Mammary epithelial cell (primary cell): ENCODE measurements at regions of chr18 and their contacts with region 1.

Region 1: DNA sequence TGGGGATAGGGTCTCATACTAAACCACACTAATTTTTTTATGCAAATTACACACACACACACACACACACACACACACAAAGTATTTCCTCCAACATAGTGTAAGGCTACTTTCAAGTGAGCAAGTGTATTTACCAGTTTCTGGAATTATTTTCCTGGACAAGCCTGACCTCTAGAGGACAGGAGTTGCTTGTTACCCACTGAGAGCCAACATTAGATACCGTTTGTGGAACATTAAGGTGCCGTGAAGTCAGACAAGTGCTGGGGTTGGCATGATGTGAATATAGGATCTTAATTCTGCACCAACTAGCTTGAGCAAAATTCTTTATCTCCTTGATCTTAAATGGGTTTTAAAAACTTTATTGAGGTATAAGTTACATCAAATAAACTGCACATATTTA is 39.3 kb upstream of the SERPINB2 start:
- DNase-seq: peak; percentile 52
- H3K4me3 ChIP-seq: no peak overlapping the region
- H3K27ac ChIP-seq: no peak overlapping the region
- H3K4me1 ChIP-seq: peaks cover 10% of the 10 kb centered on the region
- H3K27me3 ChIP-seq: no peaks in the 10 kb centered on the region
- CTCF ChIP-seq: peak; percentile 71 to 74

Region 2: GRCh38 chr18:63016270-63016669 is 831.9 kb before region 1 on chr18:
- CTCF ChIA-PET with region 1: no interaction called
- dilution Hi-C with region 1: no loop called
- in situ Hi-C with region 1: no loop called
- intact Hi-C with region 1: loop called (anchors 1 kb)
- DNase-seq: peak; percentile 19
- H3K4me3 ChIP-seq: no peak overlapping the region
- H3K27ac ChIP-seq: no peak overlapping the region
- H3K4me1 ChIP-seq: no peaks in the 10 kb centered on the region
- H3K27me3 ChIP-seq: peaks cover 2% of the 10 kb centered on the region
- CTCF ChIP-seq: peak; percentile 78 to 80

Region 3: GRCh38 chr18:63339920-63340484 is 508.2 kb before region 1 on chr18:
- CTCF ChIA-PET with region 1: no interaction called
- dilution Hi-C with region 1: no loop called
- in situ Hi-C with region 1: no loop called
- intact Hi-C with region 1: loop called (anchors 10 kb)
- DNase-seq: no peak
- H3K4me3 ChIP-seq: no peak overlapping the region
- H3K27ac ChIP-seq: no peak overlapping the region
- H3K4me1 ChIP-seq: peaks cover 16% of the 10 kb centered on the region
- H3K27me3 ChIP-seq: no peaks in the 10 kb centered on the region
- CTCF ChIP-seq: peak; percentile 48 to 53

Region 4: DNA sequence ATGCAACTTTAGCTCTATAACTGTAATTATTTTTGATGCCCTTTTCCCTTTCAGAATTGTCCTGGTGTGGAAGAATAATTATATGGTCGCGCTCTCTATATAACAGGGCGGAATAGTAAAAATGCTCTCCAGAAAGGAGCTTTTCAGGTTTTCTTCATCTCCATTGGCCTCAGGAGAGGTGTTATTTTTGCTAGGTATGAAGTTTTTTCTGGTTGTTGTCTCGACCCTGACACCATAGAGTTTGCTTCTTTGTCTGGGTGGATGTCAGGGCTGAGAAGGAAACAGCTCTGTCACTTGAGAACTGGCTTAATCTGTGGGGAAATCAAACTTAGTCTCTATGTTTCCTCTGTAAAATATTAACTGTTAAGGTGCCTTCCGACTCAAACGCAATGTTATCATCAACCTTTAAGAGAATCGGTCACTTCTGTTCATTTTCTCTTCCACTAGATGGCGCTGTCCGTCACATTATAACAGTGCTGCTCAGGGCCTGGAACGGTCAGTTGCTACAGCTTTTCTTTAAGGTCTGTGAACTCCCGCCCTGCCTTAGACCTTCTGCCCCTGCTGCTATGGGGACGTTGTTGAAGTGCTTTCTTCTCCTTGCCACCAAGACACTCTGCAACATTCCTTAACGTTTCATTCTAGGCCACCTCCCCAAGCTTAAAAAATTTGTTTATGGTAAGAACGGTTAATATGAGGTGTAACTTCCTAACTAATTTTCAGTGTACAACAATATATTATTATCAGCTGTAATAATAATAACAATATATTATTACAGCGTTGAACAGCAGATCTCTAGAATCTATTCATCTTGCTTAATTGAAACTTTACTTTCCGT is 329.8 kb before region 1 on chr18:
- CTCF ChIA-PET with region 1: no interaction called
- dilution Hi-C with region 1: loop called (anchors 25 kb)
- in situ Hi-C with region 1: loop called in 1 of 2 experiments (anchors 5 kb)
- intact Hi-C with region 1: loop called (anchors 1 kb)
- DNase-seq: peak; percentile 64
- H3K4me3 ChIP-seq: no peak overlapping the region
- H3K27ac ChIP-seq: no peak overlapping the region
- H3K4me1 ChIP-seq: no peaks in the 10 kb centered on the region
- H3K27me3 ChIP-seq: no peaks in the 10 kb centered on the region
- CTCF ChIP-seq: peak; percentile 55 to 67

Region 5: GRCh38 chr18:63676526-63676925 is 171.6 kb before region 1 on chr18:
- CTCF ChIA-PET with region 1: no interaction called
- dilution Hi-C with region 1: no loop called
- in situ Hi-C with region 1: no loop called
- intact Hi-C with region 1: loop called (anchors 2 kb)
- DNase-seq: peak; percentile 35
- H3K4me3 ChIP-seq: no peak overlapping the region
- H3K27ac ChIP-seq: no peak overlapping the region
- H3K4me1 ChIP-seq: peaks cover 8% of the 10 kb centered on the region
- H3K27me3 ChIP-seq: no peaks in the 10 kb centered on the region
- CTCF ChIP-seq: peak; percentile 78 to 85

Region 6: GRCh38 chr18:63882333-63883141 is 34.4 kb after region 1 on chr18:
- CTCF ChIA-PET with region 1: no interaction called
- dilution Hi-C with region 1: no loop called
- in situ Hi-C with region 1: no loop called
- intact Hi-C with region 1: loop called (anchors 1 kb)
- DNase-seq: peak; percentile 100
- H3K4me3 ChIP-seq: peak overlapping the region in 1 of 3 experiments; percentile 6
- H3K27ac ChIP-seq: peak overlapping the region; percentile 99
- H3K4me1 ChIP-seq: peaks cover 30% of the 10 kb centered on the region
- H3K27me3 ChIP-seq: no peaks in the 10 kb centered on the region
- CTCF ChIP-seq: no peak

Region 7: GRCh38 chr18:63949068-63949737 is 101.0 kb after region 1 on chr18 and contains the start of gene HMSD:
- CTCF ChIA-PET with region 1: no interaction called
- dilution Hi-C with region 1: no loop called
- in situ Hi-C with region 1: loop called in 1 of 2 experiments (anchors 10 kb)
- intact Hi-C with region 1: no loop called
- DNase-seq: peak; percentile 60
- H3K4me3 ChIP-seq: peak within 1 kb of the TSS; percentile 13 to 45 (median 34)
- H3K27ac ChIP-seq: no peak within 1 kb of the TSS
- H3K4me1 ChIP-seq: peaks cover 7% of the 10 kb centered on the region
- H3K27me3 ChIP-seq: no peaks in the 10 kb centered on the region
- CTCF ChIP-seq: peak in 1 of 2 donors; percentile 58
- total RNA-seq, gene HMSD: 0.38 TPM in 1 of 2 donors, not detected in the other